CD4-positive, alpha-beta memory T cell (primary cell): ENCODE measurements at regions of chr15 and their contacts with region 1.

Region 1: DNA sequence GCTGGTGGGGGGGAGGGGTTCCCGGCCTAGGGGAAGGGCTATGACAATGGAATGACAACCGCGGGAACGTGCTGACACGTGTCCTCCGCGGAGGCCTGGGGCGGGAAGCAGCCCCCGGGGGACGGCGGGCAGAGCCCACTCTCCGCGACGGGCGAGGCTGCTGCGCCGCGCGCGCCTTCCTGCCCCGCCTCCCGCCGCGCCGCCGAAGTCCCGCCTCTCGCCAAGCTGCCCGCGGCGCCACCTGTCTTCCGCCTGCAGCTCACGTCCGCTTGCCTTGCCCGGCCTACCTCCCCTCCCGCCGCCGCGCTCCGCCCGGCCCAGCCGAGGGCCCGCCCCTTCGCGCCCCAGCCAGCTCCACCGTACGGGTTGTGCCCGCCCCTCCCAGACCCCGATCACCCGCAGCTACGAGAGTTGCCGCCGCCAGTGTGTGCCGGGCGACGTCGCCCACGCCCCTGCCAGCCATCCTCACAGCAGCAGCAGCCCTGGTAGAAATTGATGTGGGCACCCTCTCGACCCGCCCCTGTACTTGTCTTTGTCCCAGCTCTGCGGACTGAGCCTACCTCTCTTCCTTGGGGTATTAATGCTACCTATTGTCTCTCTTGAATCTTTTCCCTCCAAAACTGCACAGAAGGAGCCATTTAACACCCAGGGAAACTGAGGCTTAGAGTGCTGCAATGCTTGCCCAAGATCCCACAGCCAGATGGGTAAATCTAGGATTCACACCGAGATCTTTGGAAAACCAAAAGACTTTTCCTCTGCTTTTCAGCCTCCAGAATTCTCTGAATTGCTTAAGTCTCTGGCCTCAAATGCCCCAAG is at the start of gene PARP16:
- DNase-seq: peak; percentile 89 to 92 (median 90)
- H3K4me3 ChIP-seq: peak within 1 kb of the TSS; percentile 68 to 78
- H3K4me3 Mint-ChIP-seq: peak within 1 kb of the TSS; percentile 87 to 92 (median 90)
- H3K27ac ChIP-seq: peak within 1 kb of the TSS; percentile 86
- H3K27ac Mint-ChIP-seq: peak within 1 kb of the TSS; percentile 80 to 97 (median 95)
- H3K4me1 ChIP-seq: peaks cover 29% of the 10 kb centered on the region
- H3K4me1 Mint-ChIP-seq: peaks cover 28 to 43% (median 34%) of the 10 kb centered on the region in 4 donors
- H3K27me3 ChIP-seq: no peaks in the 10 kb centered on the region
- H3K27me3 Mint-ChIP-seq: no peaks in the 10 kb centered on the region
- total RNA-seq, gene PARP16: 20.8 to 21.4 TPM

Region 2: GRCh38 chr15:65298731-65299130 is 11.8 kb after region 1 on chr15:
- CTCF ChIA-PET with region 1: interaction called, 36 read pairs
- POLR2A ChIA-PET with region 1: interaction called, 92 read pairs
- intact Hi-C with region 1: loop called (anchors 1 kb)
- DNase-seq: no peak
- H3K4me3 ChIP-seq: peak overlapping the region in 1 of 2 donors; percentile 17
- H3K4me3 Mint-ChIP-seq: peak overlapping the region; percentile 58 to 95 (median 88)
- H3K27ac ChIP-seq: no peak overlapping the region
- H3K27ac Mint-ChIP-seq: peak overlapping the region in 6 of 7 donors; percentile 81 to 97 (median 92)
- H3K4me1 ChIP-seq: peaks cover 53% of the 10 kb centered on the region
- H3K4me1 Mint-ChIP-seq: peaks cover 20 to 49% (median 38%) of the 10 kb centered on the region in 4 donors
- H3K27me3 ChIP-seq: no peaks in the 10 kb centered on the region
- H3K27me3 Mint-ChIP-seq: no peaks in the 10 kb centered on the region

Region 3: GRCh38 chr15:65304389-65305144 is 17.7 kb after region 1 on chr15 and contains the start of gene RNU5B-1:
- CTCF ChIA-PET with region 1: interaction called, 24 read pairs
- POLR2A ChIA-PET with region 1: interaction called, 89 read pairs
- intact Hi-C with region 1: loop called (anchors 1 kb)
- DNase-seq: peak; percentile 85 to 92 (median 91)
- H3K4me3 ChIP-seq: peak within 1 kb of the TSS; percentile 61 to 73
- H3K4me3 Mint-ChIP-seq: peak within 1 kb of the TSS; percentile 91 to 98 (median 95)
- H3K27ac ChIP-seq: peak within 1 kb of the TSS; percentile 92
- H3K27ac Mint-ChIP-seq: peak within 1 kb of the TSS; percentile 96 to 100 (median 99)
- H3K4me1 ChIP-seq: peaks cover 24% of the 10 kb centered on the region
- H3K4me1 Mint-ChIP-seq: peaks cover 19 to 34% (median 26%) of the 10 kb centered on the region in 4 donors
- H3K27me3 ChIP-seq: no peaks in the 10 kb centered on the region
- H3K27me3 Mint-ChIP-seq: no peaks in the 10 kb centered on the region
- total RNA-seq, gene RNU5B-1: 24.0 TPM in 1 of 2 experiments, not detected in the other